Uterus (tissue), 4 donors: ENCODE measurements at regions of chr9 and their contacts with region 1.

Region 1: DNA sequence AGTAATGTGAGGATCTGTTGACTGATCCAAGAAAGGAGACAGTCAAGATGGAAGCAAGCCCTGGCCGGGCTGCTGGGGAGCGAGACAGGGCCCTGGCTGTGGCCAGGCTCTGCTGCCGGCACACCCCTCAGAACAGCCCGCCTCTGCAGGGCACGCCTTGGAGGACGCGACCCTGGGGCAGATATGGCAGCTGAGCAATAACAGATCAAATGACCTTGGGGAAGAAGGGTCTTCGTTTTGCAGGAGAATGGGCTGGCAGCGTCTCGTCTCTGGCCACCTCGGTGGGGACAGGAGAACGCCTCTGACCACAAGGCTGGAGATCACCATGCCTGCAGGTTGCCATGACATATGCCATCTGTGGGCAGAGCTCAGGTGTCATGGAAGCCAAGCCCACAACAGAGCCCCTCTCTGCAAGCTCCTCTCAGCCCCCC is 206.5 kb downstream of the FANCC start:
- DNase-seq: no peak
- H3K4me3 ChIP-seq: no peak overlapping the region
- H3K27ac ChIP-seq: no peak overlapping the region
- H3K4me1 ChIP-seq: peaks cover 0 to 7% of the 10 kb centered on the region in 2 donors
- H3K27me3 ChIP-seq: no peaks in the 10 kb centered on the region
- CTCF ChIP-seq: no peak
- POLR2A ChIP-seq: no peak

Region 2: DNA sequence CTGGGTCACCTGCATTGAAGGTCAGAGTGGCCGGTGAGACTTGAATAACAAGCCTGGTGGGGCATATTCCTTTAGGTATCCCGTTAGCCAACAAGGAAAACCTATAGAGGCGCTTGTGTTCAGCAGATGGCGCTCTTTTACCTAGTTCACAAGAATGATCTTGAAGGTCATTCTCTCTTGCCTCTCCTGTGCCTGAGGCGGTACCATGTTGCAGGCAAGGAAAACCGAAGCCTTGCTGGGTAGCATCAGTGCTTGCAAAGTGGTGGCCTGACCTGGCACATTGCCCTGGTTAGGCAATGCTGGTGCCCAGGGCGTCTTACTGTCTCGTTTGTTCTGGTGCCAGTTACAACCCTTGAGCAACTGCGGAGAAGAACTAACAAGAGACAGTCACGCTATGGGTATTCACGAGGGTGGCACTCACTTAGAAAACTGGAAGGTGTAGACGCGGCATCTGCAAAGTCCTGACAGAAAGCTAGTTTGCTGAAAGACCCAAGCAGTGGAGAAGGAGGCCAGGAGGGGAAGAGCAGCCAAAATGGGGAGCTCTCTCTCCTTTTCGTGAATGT is 327.8 kb before region 1 on chr9:
- intact Hi-C with region 1: loop called (anchors 5 kb)
- DNase-seq: peak; percentile 68 to 87
- H3K4me3 ChIP-seq: no peak overlapping the region
- H3K27ac ChIP-seq: peak overlapping the region; percentile 51 to 64
- H3K4me1 ChIP-seq: no peaks in the 10 kb centered on the region
- H3K27me3 ChIP-seq: no peaks in the 10 kb centered on the region
- CTCF ChIP-seq: peak; percentile 73 to 80 (median 76)
- POLR2A ChIP-seq: no peak